ENCODE measurements at regions of chr6 and their contacts with region 1.

Region 1: GRCh38 chr6:170554013-170554795 is at the start of gene TBP:
- DNase-seq: peak; percentile 99
- total RNA-seq, gene TBP: 7.6 TPM

Region 2: DNA sequence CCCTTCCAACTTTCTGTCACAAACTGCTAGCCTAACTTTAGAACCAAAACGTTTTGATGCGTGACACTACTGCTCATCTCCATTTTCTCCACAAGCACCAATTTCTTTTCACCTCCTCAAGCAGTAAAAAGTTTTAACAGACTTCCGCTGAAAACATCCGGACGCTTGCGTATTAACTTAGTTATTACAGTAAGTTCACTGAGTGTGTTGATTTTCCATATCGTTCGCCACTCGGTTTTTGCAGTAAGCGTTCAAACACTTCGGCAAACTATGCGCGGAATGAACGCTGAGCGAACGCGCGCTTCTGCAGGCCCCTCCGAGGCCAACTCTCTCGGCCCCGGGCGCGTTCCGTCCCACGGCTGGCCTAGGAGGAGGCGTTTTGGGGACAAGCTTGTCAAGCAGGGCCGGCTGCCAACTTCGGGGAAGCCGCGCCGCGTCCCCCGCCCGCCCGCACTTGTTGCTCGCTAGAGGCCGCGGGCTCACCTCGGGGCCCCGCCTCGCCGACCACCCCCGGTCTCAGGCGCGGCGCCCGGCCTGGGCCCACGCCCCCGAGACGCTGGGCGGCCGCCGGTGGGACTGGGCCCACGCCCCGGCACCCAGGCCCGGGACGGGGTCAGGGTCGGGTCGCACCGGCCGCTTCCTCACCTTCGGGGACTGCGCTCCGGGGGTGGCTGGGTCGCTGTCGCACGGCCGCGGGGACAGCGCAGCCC is 830.8 kb before region 1 on chr6:
- intact Hi-C with region 1: loop called (anchors 10 kb)
- DNase-seq: peak; percentile 89

Region 3: GRCh38 chr6:169751242-169752073 is 802.7 kb before region 1 on chr6 and contains the starts of genes DYNLT2 and ERMARD:
- intact Hi-C with region 1: loop called (anchors 5 kb)
- DNase-seq: peak; percentile 96
- total RNA-seq, gene DYNLT2: 0.83 TPM
- total RNA-seq, gene ERMARD: 11.3 TPM

Region 4: GRCh38 chr6:169950558-169950957 is 603.6 kb before region 1 on chr6:
- intact Hi-C with region 1: no loop called
- DNase-seq: peak; percentile 54

Region 5: GRCh38 chr6:170306324-170307079 is 247.7 kb before region 1 on chr6 and contains the start of gene FAM120B:
- intact Hi-C with region 1: loop called (anchors 2 kb)
- DNase-seq: peak; percentile 99
- total RNA-seq, gene FAM120B: 27.4 TPM

Region 6: DNA sequence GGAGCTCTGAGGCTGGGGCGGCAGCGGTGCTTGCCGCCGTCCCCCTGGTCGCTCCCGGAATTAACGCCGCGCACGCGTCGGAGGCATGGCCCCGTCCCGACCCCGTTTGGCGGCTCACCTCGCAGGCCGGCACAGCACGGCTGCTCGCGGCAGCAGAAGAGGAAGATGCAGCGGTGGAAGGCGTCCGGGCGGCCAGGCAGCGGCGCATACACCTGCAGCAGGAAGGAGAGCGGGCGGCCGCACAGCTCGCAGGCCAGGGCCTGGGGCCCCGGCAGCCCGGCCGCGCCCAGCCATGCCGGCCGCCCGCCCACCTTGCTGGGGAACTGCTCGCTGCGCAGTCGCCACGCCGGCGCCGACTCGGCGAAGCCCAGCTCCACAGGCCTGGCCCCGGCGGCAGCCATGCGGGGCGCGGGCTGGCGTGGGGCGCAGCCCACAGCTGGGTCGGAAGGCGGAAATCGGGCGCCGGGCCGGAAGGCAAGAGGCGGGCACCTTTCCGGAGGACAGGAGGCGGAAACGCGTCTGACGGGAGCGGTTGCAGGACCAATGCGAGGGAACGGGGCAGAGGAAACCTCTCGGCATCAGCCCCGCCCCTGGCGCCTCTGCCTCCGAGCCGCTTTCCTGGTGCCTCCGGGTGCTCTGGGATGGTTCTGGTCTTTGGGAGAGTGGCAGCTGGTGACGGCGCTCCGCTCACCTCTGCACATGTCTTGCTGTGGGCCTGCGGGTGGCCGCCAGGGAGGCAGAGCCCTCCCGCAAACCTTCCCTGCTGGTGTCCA is 30.2 kb after region 1 on chr6 and contains the start of gene PDCD2:
- intact Hi-C with region 1: loop called (anchors 1 kb)
- DNase-seq: peak; percentile 97
- total RNA-seq, gene PDCD2: 36.8 TPM